Sigmoid colon (tissue), 7 donors: ENCODE measurements at regions of chr14 and their contacts with region 1.

Region 1: GRCh38 chr14:24146978-24147760 is at the start of gene RNF31:
- DNase-seq: peak; percentile 100
- H3K4me3 ChIP-seq: peak within 1 kb of the TSS; percentile 58 to 98 (median 77)
- H3K27ac ChIP-seq: peak within 1 kb of the TSS; percentile 92 to 96 (median 95)
- H3K4me1 ChIP-seq: peaks cover 0 to 46% (median 35%) of the 10 kb centered on the region in 4 donors
- H3K27me3 ChIP-seq: no peaks in the 10 kb centered on the region
- CTCF ChIP-seq: no peak
- EP300 ChIP-seq: no peak
- POLR2A ChIP-seq: peak; percentile 32 to 70
- total RNA-seq, gene RNF31: 20.2 to 38.4 (median 29.7) TPM

Region 2: DNA sequence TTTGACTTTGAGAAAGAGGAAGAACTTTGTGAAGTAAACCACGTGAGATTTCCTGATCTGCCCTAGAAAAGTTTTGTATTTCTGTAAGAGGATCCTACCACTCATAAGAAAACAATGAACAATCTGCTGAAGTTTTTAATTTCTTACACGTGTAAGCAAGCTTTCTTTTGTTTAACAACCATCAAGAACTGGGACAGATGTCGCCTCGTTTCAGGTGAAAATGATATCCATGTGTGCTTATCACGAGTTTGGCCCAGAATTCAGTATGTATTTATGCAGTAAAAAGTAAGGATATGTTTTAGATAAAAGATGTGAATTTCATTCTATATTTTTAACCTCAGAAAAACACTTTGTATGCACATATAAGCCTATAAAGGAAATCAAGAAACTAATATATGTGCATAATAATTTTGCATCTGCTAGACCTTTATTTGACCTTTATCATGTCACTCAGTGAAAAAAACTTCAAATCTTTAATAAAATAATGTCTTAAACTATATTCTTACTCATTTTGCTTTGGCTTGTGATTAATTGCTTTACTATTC is 250.5 kb before region 1 on chr14:
- intact Hi-C with region 1: no loop called
- DNase-seq: no peak
- H3K4me3 ChIP-seq: no peak overlapping the region
- H3K27ac ChIP-seq: no peak overlapping the region
- H3K4me1 ChIP-seq: no peaks in the 10 kb centered on the region
- H3K27me3 ChIP-seq: no peaks in the 10 kb centered on the region
- CTCF ChIP-seq: no peak
- EP300 ChIP-seq: no peak
- POLR2A ChIP-seq: no peak

Region 3: GRCh38 chr14:23984891-23985602 is 162.1 kb before region 1 on chr14:
- intact Hi-C with region 1: no loop called
- DNase-seq: no peak
- H3K4me3 ChIP-seq: no peak overlapping the region
- H3K27ac ChIP-seq: peak overlapping the region in 1 of 4 donors; percentile 64
- H3K4me1 ChIP-seq: peaks cover 0 to 13% (median 4%) of the 10 kb centered on the region in 4 donors
- H3K27me3 ChIP-seq: no peaks in the 10 kb centered on the region
- CTCF ChIP-seq: no peak
- EP300 ChIP-seq: no peak
- POLR2A ChIP-seq: no peak

Region 4: DNA sequence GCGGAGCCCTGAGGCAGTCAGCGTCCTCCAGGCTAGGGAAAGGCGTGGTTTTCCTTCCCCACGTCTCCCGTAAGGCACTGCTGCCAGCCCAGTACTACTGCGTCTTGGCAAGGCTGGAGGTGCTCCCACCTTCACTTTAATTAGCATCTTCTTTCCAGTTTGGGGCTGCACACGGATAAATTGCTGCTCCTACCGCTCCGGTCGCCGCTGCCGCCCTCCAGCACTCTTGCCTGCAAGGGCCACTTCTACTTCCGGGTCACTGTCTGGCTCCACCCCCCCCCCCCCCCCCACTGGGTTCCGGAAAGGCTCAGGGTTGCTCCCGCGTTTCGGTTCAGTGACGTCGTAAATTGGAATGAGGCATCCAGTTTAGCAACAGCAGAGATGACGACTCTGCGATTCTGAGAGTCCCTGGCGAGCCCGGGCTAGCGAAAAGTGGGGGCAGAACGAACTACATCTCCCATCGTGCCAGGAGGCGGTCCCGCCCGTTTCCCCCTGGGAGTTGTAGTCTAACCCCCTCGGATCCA is 85.0 kb after region 1 on chr14 and contains the start of gene NEDD8:
- intact Hi-C with region 1: loop called (anchors 5 kb)
- DNase-seq: peak; percentile 98
- H3K4me3 ChIP-seq: peak within 1 kb of the TSS; percentile 68 to 91 (median 88)
- H3K27ac ChIP-seq: peak within 1 kb of the TSS; percentile 82 to 93 (median 89)
- H3K4me1 ChIP-seq: peaks cover 0 to 32% (median 30%) of the 10 kb centered on the region in 4 donors
- H3K27me3 ChIP-seq: no peaks in the 10 kb centered on the region
- CTCF ChIP-seq: no peak
- EP300 ChIP-seq: no peak
- POLR2A ChIP-seq: peak; percentile 51 to 77
- total RNA-seq, gene NEDD8: 104 to 217 (median 189) TPM